ENCODE measurements at regions of chr10 and their contacts with region 1.

Region 1: DNA sequence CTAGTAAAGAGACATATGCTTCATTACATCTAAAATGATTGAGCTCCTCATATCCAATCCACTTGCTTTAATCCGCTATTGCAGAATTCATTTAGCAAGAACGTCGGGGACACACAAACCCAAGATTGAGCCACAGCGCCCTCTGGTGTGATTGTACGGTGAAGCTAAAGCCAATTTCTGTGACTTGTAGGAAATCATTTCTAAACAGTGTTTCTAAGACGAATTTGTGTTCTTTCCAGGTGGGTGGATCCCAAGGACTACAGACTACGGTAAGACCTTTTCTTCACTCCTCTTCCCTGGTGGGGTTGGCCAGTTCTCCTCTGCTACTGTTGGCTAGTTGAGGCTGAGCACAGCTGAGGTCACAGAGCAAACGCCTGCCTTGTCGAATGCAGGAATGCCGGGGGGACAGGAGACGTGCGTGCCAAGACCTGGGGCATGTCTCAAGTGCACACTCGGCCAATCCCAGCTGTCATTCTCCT is 5.2 kb downstream of the DMBT1 start:
- DNase-seq: peak; percentile 13 to 44 (median 37)
- H3K4me3 ChIP-seq: no peak overlapping the region
- H3K4me3 Mint-ChIP-seq: no peak overlapping the region
- H3K27ac ChIP-seq: no peak overlapping the region
- H3K27ac Mint-ChIP-seq: no peak overlapping the region
- H3K4me1 ChIP-seq: no peaks in the 10 kb centered on the region
- H3K4me1 Mint-ChIP-seq: peaks cover 4% of the 10 kb centered on the region
- H3K27me3 ChIP-seq: peaks cover 12 to 17% of the 10 kb centered on the region in 2 donors
- H3K27me3 Mint-ChIP-seq: peaks cover 21 to 33% (median 21%) of the 10 kb centered on the region in 3 donors
- CTCF ChIP-seq: peak; percentile 77

Region 2: GRCh38 chr10:122298598-122299301 is 267.0 kb before region 1 on chr10:
- intact Hi-C with region 1: loop called (anchors 5 to 10 kb)
- DNase-seq: peak; percentile 21 to 45 (median 43)
- H3K4me3 ChIP-seq: no peak overlapping the region
- H3K4me3 Mint-ChIP-seq: no peak overlapping the region
- H3K27ac ChIP-seq: no peak overlapping the region
- H3K27ac Mint-ChIP-seq: no peak overlapping the region
- H3K4me1 ChIP-seq: no peaks in the 10 kb centered on the region
- H3K4me1 Mint-ChIP-seq: no peaks in the 10 kb centered on the region
- H3K27me3 ChIP-seq: no peaks in the 10 kb centered on the region
- H3K27me3 Mint-ChIP-seq: peaks cover 3 to 9% (median 8%) of the 10 kb centered on the region in 3 donors
- CTCF ChIP-seq: peak; percentile 81

Region 3: GRCh38 chr10:122342293-122343134 is 223.3 kb before region 1 on chr10:
- intact Hi-C with region 1: loop called in 1 of 2 experiments (anchors 2 kb)
- DNase-seq: peak; percentile 5 to 14 (median 10)
- H3K4me3 ChIP-seq: no peak overlapping the region
- H3K4me3 Mint-ChIP-seq: no peak overlapping the region
- H3K27ac ChIP-seq: no peak overlapping the region
- H3K27ac Mint-ChIP-seq: no peak overlapping the region
- H3K4me1 ChIP-seq: peaks cover 0 to 3% of the 10 kb centered on the region in 2 donors
- H3K4me1 Mint-ChIP-seq: peaks cover 6% of the 10 kb centered on the region
- H3K27me3 ChIP-seq: no peaks in the 10 kb centered on the region
- H3K27me3 Mint-ChIP-seq: peaks cover 3 to 10% (median 3%) of the 10 kb centered on the region in 3 donors
- CTCF ChIP-seq: peak; percentile 70

Region 4: GRCh38 chr10:122515588-122516231 is 50.1 kb before region 1 on chr10:
- intact Hi-C with region 1: no loop called
- DNase-seq: no peak
- H3K4me3 ChIP-seq: no peak overlapping the region
- H3K4me3 Mint-ChIP-seq: no peak overlapping the region
- H3K27ac ChIP-seq: no peak overlapping the region
- H3K27ac Mint-ChIP-seq: peak overlapping the region in 1 of 7 donors; percentile 25
- H3K4me1 ChIP-seq: no peaks in the 10 kb centered on the region
- H3K4me1 Mint-ChIP-seq: peaks cover 4% of the 10 kb centered on the region
- H3K27me3 ChIP-seq: no peaks in the 10 kb centered on the region
- H3K27me3 Mint-ChIP-seq: peaks cover 3 to 4% (median 4%) of the 10 kb centered on the region in 3 donors
- CTCF ChIP-seq: no peak

Region 5: DNA sequence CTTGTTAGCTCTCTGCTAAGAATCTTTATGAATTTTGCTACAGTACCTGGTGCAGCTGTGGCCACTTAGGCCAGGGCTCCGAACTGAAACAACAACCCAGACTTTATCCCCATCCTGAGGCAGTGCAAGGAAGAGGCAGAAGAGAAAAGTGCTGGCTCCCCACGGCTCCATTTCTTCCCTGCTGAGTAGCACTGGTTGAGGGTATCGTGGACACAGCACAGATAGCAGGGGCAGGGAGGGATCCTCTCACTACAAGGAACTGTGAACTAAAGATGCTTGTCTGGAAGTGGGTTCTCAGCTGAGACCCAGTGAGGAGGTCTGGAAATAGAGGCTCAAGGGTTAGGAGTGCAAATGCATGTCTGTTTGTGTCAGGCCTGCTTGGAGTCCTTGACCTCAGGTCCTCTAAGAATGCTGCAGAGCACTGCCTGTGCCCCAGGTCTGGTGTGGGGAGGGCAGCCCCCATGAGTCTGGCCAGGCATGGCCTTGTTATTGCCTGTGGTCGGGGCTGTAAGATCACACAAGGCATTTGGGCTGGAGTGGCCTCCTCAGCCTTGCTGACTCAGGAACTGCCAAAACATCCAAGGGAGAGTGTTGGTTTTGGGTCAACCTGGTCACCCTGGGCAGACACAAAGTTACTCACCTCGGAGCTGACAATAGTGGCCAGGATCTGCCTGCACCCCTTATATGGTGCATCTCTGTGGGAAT is 52.8 kb after region 1 on chr10:
- intact Hi-C with region 1: no loop called
- DNase-seq: no peak
- H3K4me3 ChIP-seq: no peak overlapping the region
- H3K4me3 Mint-ChIP-seq: no peak overlapping the region
- H3K27ac ChIP-seq: no peak overlapping the region
- H3K27ac Mint-ChIP-seq: no peak overlapping the region
- H3K4me1 ChIP-seq: no peaks in the 10 kb centered on the region
- H3K4me1 Mint-ChIP-seq: no peaks in the 10 kb centered on the region
- H3K27me3 ChIP-seq: no peaks in the 10 kb centered on the region
- H3K27me3 Mint-ChIP-seq: peaks cover 0 to 2% (median 1%) of the 10 kb centered on the region in 3 donors
- CTCF ChIP-seq: no peak